PC-3 (cell line): ENCODE measurements at regions of chr7 and their contacts with region 1.

Region 1: GRCh38 chr7:149714050-149714909 is 59.1 kb downstream of the ZNF467 start:
- DNase-seq: peak; percentile 90
- ATAC-seq: peak; percentile 91
- H3K4me3 ChIP-seq: peak overlapping the region; percentile 85
- H3K27ac ChIP-seq: no peak overlapping the region
- H3K4me1 ChIP-seq: peaks cover 9% of the 10 kb centered on the region
- H3K27me3 ChIP-seq: no peaks in the 10 kb centered on the region
- CTCF ChIP-seq: no peak

Region 2: GRCh38 chr7:149669121-149669818 is 45.0 kb before region 1 on chr7:
- CTCF ChIA-PET with region 1: interaction called, 3 read pairs
- POLR2A ChIA-PET with region 1: no interaction called
- intact Hi-C with region 1: loop called (anchors 1 kb)
- DNase-seq: peak; percentile 43
- ATAC-seq: peak; percentile 51
- H3K4me3 ChIP-seq: no peak overlapping the region
- H3K27ac ChIP-seq: no peak overlapping the region
- H3K4me1 ChIP-seq: 0 out of 2 replicates have a peak, but pooled peaks cover 4% of the 10 kb centered on the region
- H3K27me3 ChIP-seq: no peaks in the 10 kb centered on the region
- CTCF ChIP-seq: peak; percentile 65